ENCODE measurements at regions of chr1 and their contacts with region 1.

Region 1: DNA sequence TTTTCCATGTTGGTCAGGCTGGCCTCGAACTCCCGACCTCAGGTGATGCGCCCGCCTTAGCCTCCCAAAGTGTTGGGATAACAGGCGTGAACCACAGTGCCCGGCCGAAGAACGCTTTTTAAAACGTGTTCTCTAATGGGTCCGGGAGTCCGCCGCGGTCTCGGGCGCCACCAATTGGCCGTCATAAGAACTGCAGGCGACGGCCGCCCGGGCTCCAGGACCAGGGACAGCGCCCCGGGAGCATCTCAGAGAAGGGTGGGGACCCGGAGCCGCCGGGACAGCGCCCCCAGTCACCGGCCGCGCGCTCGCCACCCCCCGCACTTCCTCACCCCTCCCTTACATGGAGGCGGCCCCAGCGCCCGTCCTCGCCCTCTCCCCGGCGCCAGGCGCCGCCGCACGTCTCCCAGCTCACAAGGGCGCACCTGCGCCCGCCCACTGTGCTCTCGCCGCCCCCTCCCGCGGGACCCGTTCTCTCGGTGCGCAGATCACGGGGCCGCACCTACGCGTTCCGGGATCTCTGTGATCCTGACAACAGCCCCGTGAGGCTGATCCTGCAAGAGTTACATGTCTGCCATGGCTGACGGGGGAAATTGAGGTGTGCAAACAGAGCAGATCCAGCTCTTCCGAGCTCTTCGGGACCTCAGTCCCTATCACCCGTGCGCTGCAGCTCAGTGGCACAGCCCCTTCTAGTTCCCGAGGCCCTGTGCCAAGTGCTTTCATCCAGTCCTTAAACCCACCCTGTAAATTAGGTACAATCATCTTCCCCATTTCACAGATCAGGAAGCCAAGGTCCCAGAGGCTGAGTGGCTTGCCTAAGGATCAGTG is 9.8 kb downstream of the RAP1GAP start:
- DNase-seq: peak; percentile 60 to 63
- ATAC-seq: peak; percentile 55 to 75
- H3K4me3 ChIP-seq: no peak overlapping the region
- H3K27ac ChIP-seq: no peak overlapping the region
- H3K4me1 ChIP-seq: peaks cover 17% of the 10 kb centered on the region
- CTCF ChIP-seq: peak; percentile 72
- EP300 ChIP-seq: no peak
- POLR2A ChIP-seq: no peak
- RAD21 ChIP-seq: peak; percentile 87 to 91

Region 2: GRCh38 chr1:21508580-21509350 is 150.5 kb before region 1 on chr1:
- CTCF ChIA-PET with region 1: interaction called, 39 read pairs
- POLR2A ChIA-PET with region 1: no interaction called
- DNase-seq: peak; percentile 30 to 62
- ATAC-seq: peak; percentile 88 to 91
- H3K4me3 ChIP-seq: peak overlapping the region; percentile 41
- H3K27ac ChIP-seq: peak overlapping the region in 1 of 2 experiments; percentile 58; a peak in 3 of 6 replicates
- H3K4me1 ChIP-seq: no peaks in the 10 kb centered on the region
- CTCF ChIP-seq: peak; percentile 72
- EP300 ChIP-seq: no peak
- POLR2A ChIP-seq: no peak
- RAD21 ChIP-seq: peak; percentile 52 to 75

Region 3: GRCh38 chr1:21594935-21595897 is 64.1 kb before region 1 on chr1:
- CTCF ChIA-PET with region 1: interaction called, 13 read pairs
- POLR2A ChIA-PET with region 1: no interaction called
- DNase-seq: peak; percentile 60 to 70
- ATAC-seq: peak in 1 of 2 experiments; percentile 77; a peak in 3 of 6 replicates
- H3K4me3 ChIP-seq: no peak overlapping the region
- H3K27ac ChIP-seq: no peak overlapping the region
- H3K4me1 ChIP-seq: 0 out of 3 replicates have a peak, but pooled peaks cover 5% of the 10 kb centered on the region
- CTCF ChIP-seq: peak; percentile 62
- EP300 ChIP-seq: no peak
- POLR2A ChIP-seq: no peak
- RAD21 ChIP-seq: peak; percentile 69 to 86

Region 4: GRCh38 chr1:21622466-21623315 is 36.6 kb before region 1 on chr1:
- CTCF ChIA-PET with region 1: interaction called, 20 read pairs
- POLR2A ChIA-PET with region 1: no interaction called
- DNase-seq: no peak
- ATAC-seq: peak; percentile 36 to 51
- H3K4me3 ChIP-seq: peak overlapping the region; percentile 58
- H3K27ac ChIP-seq: peak overlapping the region; percentile 85 to 92
- H3K4me1 ChIP-seq: peaks cover 50% of the 10 kb centered on the region
- CTCF ChIP-seq: no peak
- EP300 ChIP-seq: no peak
- POLR2A ChIP-seq: 0 out of 2 replicates have a peak, but pooled peaks have one; percentile 11
- RAD21 ChIP-seq: no peak

Region 5: DNA sequence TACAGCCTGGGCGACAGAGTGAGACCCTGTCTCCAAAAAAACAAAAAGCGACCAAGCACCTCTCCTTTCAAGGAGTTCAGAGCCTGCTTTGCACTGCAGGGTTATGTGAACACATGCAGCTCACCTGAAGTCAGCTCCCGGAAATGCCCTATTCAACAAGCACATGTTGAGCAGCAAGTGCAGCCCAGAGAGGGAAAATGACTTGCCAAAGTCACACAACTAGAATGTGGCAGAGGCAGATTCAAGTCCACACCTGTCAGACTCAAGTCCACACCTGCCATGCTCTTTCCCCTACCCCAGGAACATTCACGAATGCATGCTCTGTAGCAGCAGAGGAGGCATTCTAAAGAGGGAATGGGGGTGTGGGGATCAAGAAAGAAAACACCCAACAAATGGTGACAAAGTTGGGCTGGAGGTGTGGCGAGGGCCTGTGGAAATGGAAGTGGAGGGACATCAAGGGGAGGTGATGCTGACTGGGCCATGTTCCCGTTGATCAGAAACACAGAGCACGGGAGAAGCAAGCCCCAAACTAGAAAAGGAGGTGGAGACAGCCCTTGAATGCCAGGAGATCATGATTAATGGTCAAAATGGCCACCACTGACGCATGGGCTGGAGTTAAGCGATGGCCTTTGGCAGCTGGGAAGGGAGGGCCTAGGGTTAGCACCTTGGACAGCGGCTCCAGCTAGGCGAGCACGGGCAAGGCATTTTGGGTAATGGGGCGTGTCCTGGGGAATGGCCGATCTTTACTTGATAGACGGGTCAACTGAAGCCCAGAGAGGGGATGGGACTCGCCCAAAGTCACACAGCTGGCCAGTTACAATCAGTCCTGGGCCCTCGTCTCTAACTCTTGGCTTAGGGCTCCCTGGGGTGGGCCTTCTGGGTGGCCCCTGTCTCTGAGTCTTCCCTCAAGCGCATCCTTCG is 11.6 kb before region 1 on chr1:
- CTCF ChIA-PET with region 1: interaction called, 29 read pairs
- POLR2A ChIA-PET with region 1: no interaction called
- DNase-seq: peak in 1 of 2 experiments; percentile 55
- ATAC-seq: peak in 1 of 2 experiments; percentile 78; a peak in 3 of 6 replicates
- H3K4me3 ChIP-seq: no peak overlapping the region
- H3K27ac ChIP-seq: no peak overlapping the region
- H3K4me1 ChIP-seq: peaks cover 20% of the 10 kb centered on the region
- CTCF ChIP-seq: no peak
- EP300 ChIP-seq: no peak
- POLR2A ChIP-seq: no peak
- RAD21 ChIP-seq: no peak

Region 6: GRCh38 chr1:21707891-21708290 is 48.6 kb after region 1 on chr1:
- CTCF ChIA-PET with region 1: no interaction called
- POLR2A ChIA-PET with region 1: no interaction called
- DNase-seq: no peak
- ATAC-seq: no peak
- H3K4me3 ChIP-seq: no peak overlapping the region
- H3K27ac ChIP-seq: no peak overlapping the region
- H3K4me1 ChIP-seq: peaks cover 9% of the 10 kb centered on the region; the same call in 2 of the 3 replicates
- CTCF ChIP-seq: no peak
- EP300 ChIP-seq: no peak
- POLR2A ChIP-seq: no peak
- RAD21 ChIP-seq: no peak

Measured in A549 (cell line).